Spleen (tissue), 13 donors: ENCODE measurements at regions of chr16 and their contacts with region 1.

Region 1: DNA sequence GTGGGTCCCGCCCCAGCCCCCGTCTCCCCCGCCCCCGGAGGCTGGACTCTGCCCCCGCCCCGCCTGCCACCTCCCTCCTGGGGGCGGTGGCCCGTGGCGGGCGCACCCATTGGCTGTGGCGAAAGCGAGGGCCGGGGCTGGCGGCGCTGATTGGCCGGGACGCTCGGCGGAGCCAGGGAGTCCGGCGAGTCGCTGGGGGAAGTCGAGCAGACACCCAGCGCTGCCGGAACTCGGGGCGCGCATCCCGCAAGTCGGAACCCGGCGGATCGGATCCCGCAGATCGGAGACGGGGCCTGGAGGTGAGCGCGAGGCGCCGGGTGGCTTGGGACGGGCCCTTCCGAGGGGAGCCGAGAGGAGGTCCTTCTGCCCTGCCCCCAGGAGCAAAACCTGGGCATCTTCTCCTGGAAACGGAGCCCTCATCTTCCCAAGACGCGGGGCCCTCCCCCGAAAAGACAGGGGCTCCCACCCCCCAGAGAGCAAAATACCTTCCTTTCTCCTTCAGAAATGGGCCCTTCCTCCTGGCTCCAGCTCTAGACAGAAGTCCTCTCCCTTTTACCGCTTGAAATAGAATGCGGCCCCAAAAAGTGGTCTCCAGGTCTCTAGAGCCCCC is at the start of gene ABAT:
- DNase-seq: peak; percentile 98
- H3K4me3 ChIP-seq: peak within 1 kb of the TSS; percentile 50 to 70 (median 62)
- H3K27ac ChIP-seq: peak within 1 kb of the TSS in 5 of 8 donors; percentile 39 to 75 (median 57)
- H3K4me1 ChIP-seq: peaks cover 2 to 27% (median 18%) of the 10 kb centered on the region in 6 donors
- H3K27me3 ChIP-seq: no peaks in the 10 kb centered on the region
- CTCF ChIP-seq: peak in 1 of 11 experiments; percentile 30
- POLR2A ChIP-seq: no peak
- total RNA-seq, gene ABAT: 6.2 to 13.5 (median 9.0) TPM

Region 2: DNA sequence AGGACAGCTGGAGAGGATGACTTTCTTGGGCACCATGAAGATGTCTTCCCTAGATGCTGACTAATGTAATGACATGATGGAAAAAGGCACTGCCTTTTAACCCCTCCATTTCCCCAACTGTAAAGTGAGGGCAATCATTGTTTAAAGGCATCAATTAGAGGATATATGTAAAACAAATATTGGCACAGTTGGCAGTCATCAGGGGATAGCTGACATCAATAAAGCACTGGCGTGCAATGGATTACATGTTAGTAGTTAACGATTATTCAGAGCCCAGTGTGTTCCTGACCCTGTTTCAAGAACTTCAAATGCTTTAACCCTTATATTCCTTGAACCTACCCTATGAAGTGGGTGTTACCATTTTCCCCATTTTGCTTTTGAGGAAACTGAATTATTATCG is 184.9 kb before region 1 on chr16:
- intact Hi-C with region 1: no loop called
- DNase-seq: no peak
- H3K4me3 ChIP-seq: no peak overlapping the region
- H3K27ac ChIP-seq: no peak overlapping the region
- H3K4me1 ChIP-seq: no peaks in the 10 kb centered on the region
- H3K27me3 ChIP-seq: peaks cover 0 to 4% (median 0%) of the 10 kb centered on the region in 7 donors
- CTCF ChIP-seq: no peak
- POLR2A ChIP-seq: no peak

Region 3: GRCh38 chr16:8621572-8622314 is 52.8 kb before region 1 on chr16 and contains the start of gene METTL22:
- intact Hi-C with region 1: no loop called
- DNase-seq: peak; percentile 97
- H3K4me3 ChIP-seq: peak within 1 kb of the TSS; percentile 51 to 94 (median 80)
- H3K27ac ChIP-seq: peak within 1 kb of the TSS; percentile 79 to 93 (median 84)
- H3K4me1 ChIP-seq: peaks cover 9 to 46% (median 21%) of the 10 kb centered on the region in 6 donors
- H3K27me3 ChIP-seq: peaks cover 0 to 12% (median 0%) of the 10 kb centered on the region in 7 donors
- CTCF ChIP-seq: peak in 2 of 11 experiments; percentile 16 to 21
- POLR2A ChIP-seq: peak in 2 of 3 donors; percentile 60 to 66
- total RNA-seq, gene METTL22: 35.7 to 58.8 (median 47.5) TPM

Region 4: DNA sequence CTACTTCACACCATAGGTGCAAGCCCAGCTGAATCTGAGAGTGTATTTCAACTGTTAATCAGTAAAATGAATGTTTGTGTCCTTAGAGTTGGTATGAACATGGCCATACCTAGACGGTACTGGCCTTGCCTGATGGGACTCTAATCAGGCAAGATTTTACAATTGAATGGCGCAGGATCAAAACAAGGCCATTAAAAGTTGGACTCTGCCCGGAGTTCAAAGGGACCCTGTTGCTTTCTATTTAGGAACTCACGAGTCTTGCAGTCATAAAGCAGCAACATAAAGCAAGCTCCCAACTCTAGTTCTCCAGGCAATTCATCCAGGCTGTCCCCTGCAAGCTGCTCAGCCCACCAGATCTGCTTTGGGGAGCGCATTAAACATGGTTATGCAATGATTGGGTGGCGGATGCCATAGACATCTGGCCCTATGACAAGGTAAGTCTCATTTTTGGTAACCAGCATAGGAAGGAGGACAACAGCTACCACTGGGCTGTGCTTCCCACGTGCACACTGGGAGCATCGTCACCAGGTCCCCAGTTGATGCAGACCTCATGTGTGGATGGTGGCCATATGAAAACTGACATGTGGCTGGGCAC is 114.2 kb after region 1 on chr16:
- intact Hi-C with region 1: loop called (anchors 10 kb)
- DNase-seq: no peak
- H3K4me3 ChIP-seq: no peak overlapping the region
- H3K27ac ChIP-seq: no peak overlapping the region
- H3K4me1 ChIP-seq: no peaks in the 10 kb centered on the region
- H3K27me3 ChIP-seq: no peaks in the 10 kb centered on the region
- CTCF ChIP-seq: no peak
- POLR2A ChIP-seq: no peak

Region 5: DNA sequence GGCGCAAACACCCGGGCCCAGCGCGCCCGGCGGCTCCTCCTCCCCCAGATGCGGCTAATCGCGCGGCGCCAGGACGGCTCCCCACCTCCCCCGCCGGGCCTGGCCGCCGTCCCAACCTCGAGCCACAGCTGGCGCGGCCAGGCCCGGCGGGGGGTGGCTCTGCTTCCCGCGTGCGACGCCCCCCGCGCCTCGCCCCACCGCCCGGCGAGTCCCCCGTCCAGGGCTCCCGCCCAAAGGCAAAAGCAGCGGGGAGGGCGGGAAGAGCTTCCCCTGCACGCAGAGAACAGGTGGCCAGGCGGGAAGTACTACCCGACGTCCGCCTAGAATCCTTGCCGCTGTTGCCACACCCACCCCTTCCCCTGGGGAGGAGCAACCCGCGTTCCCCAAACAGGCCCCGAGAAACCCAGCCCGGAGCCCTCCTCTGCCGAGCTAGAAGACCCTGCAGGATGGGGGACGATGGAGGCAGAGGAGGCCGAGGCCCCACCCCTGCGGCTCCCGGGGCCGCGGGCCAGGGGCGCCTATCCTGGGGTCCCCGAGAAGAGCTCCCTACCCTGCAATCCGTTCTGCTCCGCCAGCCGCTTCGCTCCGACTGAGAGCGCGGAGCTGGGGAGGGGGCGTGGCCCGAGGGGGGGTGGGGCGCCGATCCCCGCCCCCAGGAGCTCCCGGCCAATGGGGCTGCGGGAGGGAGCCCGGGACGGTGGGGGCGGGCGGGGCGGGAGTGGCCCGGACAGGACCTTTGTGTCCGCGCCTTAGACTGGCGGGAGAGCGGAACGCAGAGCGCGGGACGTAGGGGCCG is 194.1 kb after region 1 on chr16 and contains the start of gene CARHSP1:
- intact Hi-C with region 1: loop called (anchors 5 kb)
- DNase-seq: peak; percentile 96
- H3K4me3 ChIP-seq: peak within 1 kb of the TSS; percentile 56 to 94 (median 84)
- H3K27ac ChIP-seq: peak within 1 kb of the TSS; percentile 77 to 94 (median 91)
- H3K4me1 ChIP-seq: peaks cover 30 to 76% (median 71%) of the 10 kb centered on the region in 6 donors
- H3K27me3 ChIP-seq: no peaks in the 10 kb centered on the region
- CTCF ChIP-seq: peak in 1 of 11 experiments; percentile 30
- POLR2A ChIP-seq: peak in 1 of 3 donors; percentile 42
- total RNA-seq, gene CARHSP1: 45.5 to 75.2 (median 53.2) TPM